ENCODE measurements at regions of chrX and their contacts with region 1.

Region 1: DNA sequence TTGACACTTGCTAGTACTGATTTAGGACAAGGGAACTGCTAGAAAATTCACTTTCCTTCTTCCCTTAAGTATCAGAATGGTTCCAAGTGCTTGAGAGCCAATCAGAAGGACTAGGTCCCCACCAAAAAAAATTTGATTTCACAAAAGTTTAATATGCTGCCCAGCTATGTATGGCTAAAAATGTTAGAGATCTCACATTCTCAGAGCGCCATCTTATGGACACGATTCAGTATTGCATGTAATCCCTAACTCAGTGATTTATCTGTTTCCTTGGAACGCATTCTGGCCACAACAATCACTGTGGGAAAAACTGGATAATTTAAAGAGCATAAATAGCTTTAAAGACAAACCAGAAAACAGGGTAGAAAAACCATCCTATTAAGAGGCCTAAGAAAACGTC is 255.1 kb upstream of the GPC4 start:
- DNase-seq: peak in 2 of 14 experiments; percentile 16 to 28
- ATAC-seq: no peak
- H3K4me3 ChIP-seq: no peak overlapping the region
- H3K4me3 Mint-ChIP-seq: no peak overlapping the region
- H3K27ac ChIP-seq: no peak overlapping the region
- H3K27ac Mint-ChIP-seq: no peak overlapping the region
- H3K4me1 ChIP-seq: no peaks in the 10 kb centered on the region
- H3K4me1 Mint-ChIP-seq: no peaks in the 10 kb centered on the region
- H3K27me3 ChIP-seq: no peaks in the 10 kb centered on the region
- H3K27me3 Mint-ChIP-seq: no peaks in the 10 kb centered on the region
- CTCF ChIP-seq: no peak

Region 2: GRCh38 chrX:132968296-132968949 is 702.0 kb before region 1 on chrX:
- CTCF ChIA-PET with region 1: no interaction called
- POLR2A ChIA-PET with region 1: no interaction called
- intact Hi-C with region 1: loop called in 1 of 2 experiments (anchors 10 kb)
- DNase-seq: no peak
- ATAC-seq: no peak
- H3K4me3 ChIP-seq: no peak overlapping the region
- H3K4me3 Mint-ChIP-seq: no peak overlapping the region
- H3K27ac ChIP-seq: no peak overlapping the region
- H3K27ac Mint-ChIP-seq: no peak overlapping the region
- H3K4me1 ChIP-seq: no peaks in the 10 kb centered on the region
- H3K4me1 Mint-ChIP-seq: no peaks in the 10 kb centered on the region
- H3K27me3 ChIP-seq: no peaks in the 10 kb centered on the region
- H3K27me3 Mint-ChIP-seq: peaks cover 5% of the 10 kb centered on the region
- CTCF ChIP-seq: no peak

Region 3: DNA sequence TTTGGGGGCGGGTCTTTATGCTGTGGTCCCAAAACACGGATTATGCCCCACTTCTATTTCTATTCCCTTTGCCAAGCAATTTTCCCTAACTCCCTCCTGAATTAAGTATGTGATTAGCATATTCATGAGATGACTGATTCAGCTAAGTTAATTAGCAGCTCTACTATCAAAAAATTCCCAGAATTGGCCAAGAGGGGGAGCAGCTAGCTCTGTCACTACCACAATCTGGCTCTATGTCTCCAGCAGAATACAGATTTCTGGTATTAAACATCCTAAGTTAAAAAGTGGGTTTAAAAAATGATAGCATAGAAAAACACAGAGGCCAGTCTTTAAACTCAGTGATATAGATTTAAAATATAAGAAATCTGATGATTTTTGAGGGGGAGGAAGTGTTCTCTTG is 335.4 kb before region 1 on chrX:
- CTCF ChIA-PET with region 1: no interaction called
- POLR2A ChIA-PET with region 1: no interaction called
- intact Hi-C with region 1: loop called in 1 of 2 experiments (anchors 5 kb)
- DNase-seq: peak in 3 of 14 experiments; percentile 5 to 13 (median 6)
- ATAC-seq: no peak
- H3K4me3 ChIP-seq: no peak overlapping the region
- H3K4me3 Mint-ChIP-seq: no peak overlapping the region
- H3K27ac ChIP-seq: no peak overlapping the region
- H3K27ac Mint-ChIP-seq: no peak overlapping the region
- H3K4me1 ChIP-seq: no peaks in the 10 kb centered on the region
- H3K4me1 Mint-ChIP-seq: no peaks in the 10 kb centered on the region
- H3K27me3 ChIP-seq: no peaks in the 10 kb centered on the region
- H3K27me3 Mint-ChIP-seq: no peaks in the 10 kb centered on the region
- CTCF ChIP-seq: no peak

Region 4: GRCh38 chrX:133523081-133523487 is 147.3 kb before region 1 on chrX:
- CTCF ChIA-PET with region 1: no interaction called
- POLR2A ChIA-PET with region 1: no interaction called
- intact Hi-C with region 1: no loop called
- DNase-seq: no peak
- ATAC-seq: no peak
- H3K4me3 ChIP-seq: no peak overlapping the region
- H3K4me3 Mint-ChIP-seq: no peak overlapping the region
- H3K27ac ChIP-seq: no peak overlapping the region
- H3K27ac Mint-ChIP-seq: no peak overlapping the region
- H3K4me1 ChIP-seq: no peaks in the 10 kb centered on the region
- H3K4me1 Mint-ChIP-seq: no peaks in the 10 kb centered on the region
- H3K27me3 ChIP-seq: no peaks in the 10 kb centered on the region
- H3K27me3 Mint-ChIP-seq: no peaks in the 10 kb centered on the region
- CTCF ChIP-seq: no peak